GM13977 (cell line): ENCODE measurements at regions of chr2 and their contacts with region 1.

Region 1: GRCh38 chr2:218301176-218301819 is 9.0 kb upstream of the TMBIM1 start:
- DNase-seq: peak; percentile 73
- CTCF ChIP-seq: peak; percentile 91

Region 2: DNA sequence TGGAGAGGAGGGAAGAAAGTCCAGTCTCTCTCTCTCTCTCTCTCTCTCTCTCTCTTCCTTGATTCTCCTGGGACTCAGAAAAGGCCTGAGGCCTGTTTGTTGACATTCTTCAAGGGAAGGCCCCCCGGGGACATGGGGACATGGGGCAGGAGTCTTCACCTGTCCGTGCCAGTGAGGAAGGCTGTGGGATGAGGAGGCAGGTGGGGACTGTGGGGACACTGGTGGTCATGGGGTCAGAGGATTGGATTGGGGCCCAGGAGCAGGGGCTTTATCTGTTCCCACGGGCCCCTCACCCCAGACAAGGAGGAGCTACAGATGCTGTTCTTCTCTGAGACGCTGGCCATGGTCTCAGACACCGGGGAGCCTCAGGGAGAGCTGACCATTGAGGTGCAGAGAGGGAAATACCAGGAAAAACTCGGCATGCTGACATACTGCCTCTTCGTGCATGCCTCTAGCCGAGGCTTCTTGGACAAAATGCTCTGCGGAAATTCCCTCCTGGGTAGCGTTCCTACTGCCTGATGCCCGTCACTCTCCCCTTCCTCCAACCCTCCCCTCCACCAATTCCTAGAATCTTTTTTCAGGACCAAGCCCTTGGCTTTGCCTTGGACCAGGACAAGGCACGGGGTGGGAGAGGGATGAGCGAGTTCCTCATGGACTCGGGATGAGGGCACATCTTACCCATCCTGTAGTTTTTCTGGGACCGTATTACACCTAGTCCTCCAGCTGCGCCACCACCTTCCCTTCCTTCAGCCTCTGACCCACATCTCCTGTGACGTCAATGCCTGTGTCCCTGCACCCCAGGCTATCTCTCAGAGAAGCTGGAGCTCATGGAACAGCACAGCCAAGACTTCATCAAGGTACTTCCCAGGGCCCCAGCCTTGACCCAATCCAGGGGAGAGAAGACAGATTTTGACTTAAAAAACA is 56.2 kb after region 1 on chr2:
- in situ Hi-C with region 1: loop called (anchors 10 kb)
- DNase-seq: no peak
- CTCF ChIP-seq: no peak

Region 3: GRCh38 chr2:218583983-218584850 is 282.9 kb after region 1 on chr2:
- in situ Hi-C with region 1: no loop called
- DNase-seq: no peak
- CTCF ChIP-seq: no peak